Heart left ventricle (tissue), 16 donors: ENCODE measurements at regions of chr3 and their contacts with region 1.

Region 1: DNA sequence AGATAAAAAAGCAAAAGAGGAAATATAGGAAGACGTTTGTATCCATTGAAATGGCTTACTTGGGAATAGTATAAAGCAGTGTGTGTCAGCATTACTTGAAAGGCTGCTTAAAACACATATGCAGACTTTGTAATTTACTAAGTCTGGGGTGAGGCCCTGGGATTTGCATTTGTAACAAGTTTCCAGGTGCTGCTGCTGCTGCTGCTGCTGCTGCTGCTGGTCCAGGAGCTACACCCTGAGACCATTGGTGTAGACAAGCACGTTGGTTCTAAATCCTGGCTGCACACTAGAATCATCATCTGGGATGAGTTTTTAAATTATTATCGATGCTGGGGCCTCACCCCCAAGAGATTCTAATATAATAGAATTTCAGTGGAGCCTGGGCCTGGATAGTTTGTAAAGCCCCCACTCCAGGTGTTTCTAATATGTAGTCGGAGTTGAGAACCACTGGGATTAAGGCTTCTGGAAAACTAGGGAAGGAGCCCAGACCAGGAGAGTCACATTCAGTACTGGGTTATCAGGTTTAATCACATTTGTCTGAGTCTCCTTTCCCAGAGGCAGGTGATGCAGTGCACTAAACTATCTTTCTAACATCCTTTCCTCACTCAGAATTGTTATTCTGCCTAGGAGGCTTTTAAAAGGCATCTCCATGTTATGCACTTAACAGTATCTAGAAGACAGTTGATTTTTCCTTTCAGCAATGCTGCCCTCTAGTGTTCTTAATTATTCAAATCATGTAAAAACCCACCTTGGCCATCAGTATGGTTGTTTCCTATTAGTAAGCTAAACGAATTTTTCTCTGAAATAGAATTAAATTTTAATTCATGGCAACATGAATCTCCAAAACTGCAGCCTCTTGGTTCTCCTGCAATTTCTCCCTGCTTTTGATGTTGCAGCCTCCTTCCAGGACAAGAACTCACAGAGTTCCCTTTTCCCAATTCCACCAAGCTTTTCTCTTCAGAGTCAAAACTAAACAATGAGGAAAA is 45.4 kb downstream of the SSR3 start:
- DNase-seq: no peak
- ATAC-seq: peak in 3 of 4 donors; percentile 56 to 75 (median 66)
- H3K4me3 ChIP-seq: no peak overlapping the region
- H3K27ac ChIP-seq: no peak overlapping the region
- H3K4me1 ChIP-seq: no peaks in the 10 kb centered on the region
- H3K27me3 ChIP-seq: no peaks in the 10 kb centered on the region
- CTCF ChIP-seq: peak; percentile 61 to 78 (median 68)
- POLR2A ChIP-seq: no peak

Region 2: DNA sequence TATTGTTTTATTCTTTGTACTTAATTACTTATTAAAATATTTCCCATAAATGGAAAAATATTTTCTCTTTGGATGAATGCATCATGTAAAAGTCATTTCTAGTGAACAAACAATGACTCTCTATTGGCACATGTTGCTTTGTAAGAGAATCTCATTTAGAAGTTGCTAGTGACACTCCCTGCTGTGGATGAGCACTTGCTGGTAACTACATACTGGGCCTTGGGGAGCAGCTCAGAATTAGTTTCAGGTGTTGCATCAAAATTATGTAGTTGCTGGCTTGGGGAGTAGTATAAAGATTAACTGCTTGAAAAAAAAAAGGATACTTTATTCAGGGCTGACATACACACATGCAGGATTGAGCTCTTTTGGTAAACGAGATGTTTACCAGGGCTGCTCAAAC is 469.4 kb before region 1 on chr3:
- intact Hi-C with region 1: loop called in 6 of 10 experiments (anchors 5 to 10 kb)
- DNase-seq: no peak
- ATAC-seq: no peak
- H3K4me3 ChIP-seq: no peak overlapping the region
- H3K27ac ChIP-seq: no peak overlapping the region
- H3K4me1 ChIP-seq: no peaks in the 10 kb centered on the region
- H3K27me3 ChIP-seq: no peaks in the 10 kb centered on the region
- CTCF ChIP-seq: no peak
- POLR2A ChIP-seq: no peak

Region 3: GRCh38 chr3:156174229-156174847 is 335.1 kb before region 1 on chr3:
- intact Hi-C with region 1: loop called in 2 of 10 experiments (anchors 5 kb)
- DNase-seq: no peak
- ATAC-seq: peak in 3 of 4 donors; percentile 61 to 77 (median 75)
- H3K4me3 ChIP-seq: no peak overlapping the region
- H3K27ac ChIP-seq: no peak overlapping the region
- H3K4me1 ChIP-seq: peaks cover 0 to 5% (median 0%) of the 10 kb centered on the region in 12 donors
- H3K27me3 ChIP-seq: no peaks in the 10 kb centered on the region
- CTCF ChIP-seq: peak in 10 of 12 donors; percentile 7 to 52 (median 30)
- POLR2A ChIP-seq: no peak

Region 4: DNA sequence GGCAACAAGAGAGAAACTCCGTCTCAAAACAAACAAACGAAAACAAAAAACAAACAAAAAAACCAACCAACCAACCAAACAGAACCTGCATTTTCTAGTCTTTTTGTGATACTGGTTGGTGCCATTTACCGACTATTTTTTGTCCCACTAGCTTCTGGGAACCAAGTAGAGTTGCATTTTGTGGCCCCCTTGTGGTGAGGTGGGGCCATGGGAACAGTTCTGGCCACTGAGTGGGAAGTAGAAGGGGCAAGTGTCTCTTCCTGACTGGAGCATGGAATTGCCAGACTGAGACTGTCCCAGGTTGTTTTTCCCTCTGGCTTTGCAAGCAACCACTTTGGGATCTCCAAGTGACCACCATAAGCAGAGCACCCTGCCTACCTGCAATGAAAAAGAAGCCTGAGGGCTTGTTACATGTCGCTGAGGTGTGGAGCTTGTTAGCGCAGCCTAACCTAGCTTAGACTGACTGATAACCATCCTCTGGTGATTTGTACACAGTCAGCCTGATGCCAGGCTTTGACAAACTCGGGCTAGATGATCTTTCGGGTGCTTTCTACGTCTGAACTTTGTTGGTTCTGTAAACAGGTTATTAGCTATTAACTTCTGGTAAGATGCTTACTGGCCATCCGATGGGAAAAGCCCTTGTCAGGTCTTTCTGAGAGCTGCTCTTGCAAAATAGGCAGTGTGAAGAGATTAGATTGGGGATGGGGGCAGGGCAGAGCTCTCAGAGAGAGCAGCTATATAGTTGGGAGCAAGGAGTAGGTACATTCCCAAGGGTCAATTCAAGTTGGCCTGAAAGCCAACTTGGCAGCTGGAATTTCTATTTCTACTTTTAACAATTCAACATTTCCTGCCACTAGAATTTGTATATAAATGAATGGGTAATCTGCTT is 126.8 kb before region 1 on chr3:
- intact Hi-C with region 1: loop called in 1 of 10 experiments (anchors 2 kb)
- DNase-seq: no peak
- ATAC-seq: no peak
- H3K4me3 ChIP-seq: no peak overlapping the region
- H3K27ac ChIP-seq: peak overlapping the region in 6 of 12 donors; percentile 5 to 53 (median 34)
- H3K4me1 ChIP-seq: peaks cover 0 to 29% (median 3%) of the 10 kb centered on the region in 12 donors
- H3K27me3 ChIP-seq: no peaks in the 10 kb centered on the region
- CTCF ChIP-seq: peak in 11 of 12 donors; percentile 16 to 48 (median 35)
- POLR2A ChIP-seq: no peak